OCI-LY7 (cell line): ENCODE measurements at regions of chr6 and their contacts with region 1.

Region 1: GRCh38 chr6:156279261-156279969 is 497.8 kb upstream of the ARID1B start:
- DNase-seq: peak; percentile 98
- H3K4me3 ChIP-seq: peak overlapping the region; percentile 61
- H3K27ac ChIP-seq: peak overlapping the region; percentile 96
- H3K4me1 ChIP-seq: peaks cover 61% of the 10 kb centered on the region
- CTCF ChIP-seq: no peak

Region 2: GRCh38 chr6:156185113-156185512 is 94.3 kb before region 1 on chr6:
- CTCF ChIA-PET with region 1: no interaction called
- POLR2A ChIA-PET with region 1: interaction called, 6 read pairs
- intact Hi-C with region 1: loop called (anchors 1 kb)
- DNase-seq: peak; percentile 85
- H3K4me3 ChIP-seq: no peak overlapping the region
- H3K27ac ChIP-seq: peak overlapping the region; percentile 66
- H3K4me1 ChIP-seq: peaks cover 58% of the 10 kb centered on the region
- CTCF ChIP-seq: no peak

Region 3: DNA sequence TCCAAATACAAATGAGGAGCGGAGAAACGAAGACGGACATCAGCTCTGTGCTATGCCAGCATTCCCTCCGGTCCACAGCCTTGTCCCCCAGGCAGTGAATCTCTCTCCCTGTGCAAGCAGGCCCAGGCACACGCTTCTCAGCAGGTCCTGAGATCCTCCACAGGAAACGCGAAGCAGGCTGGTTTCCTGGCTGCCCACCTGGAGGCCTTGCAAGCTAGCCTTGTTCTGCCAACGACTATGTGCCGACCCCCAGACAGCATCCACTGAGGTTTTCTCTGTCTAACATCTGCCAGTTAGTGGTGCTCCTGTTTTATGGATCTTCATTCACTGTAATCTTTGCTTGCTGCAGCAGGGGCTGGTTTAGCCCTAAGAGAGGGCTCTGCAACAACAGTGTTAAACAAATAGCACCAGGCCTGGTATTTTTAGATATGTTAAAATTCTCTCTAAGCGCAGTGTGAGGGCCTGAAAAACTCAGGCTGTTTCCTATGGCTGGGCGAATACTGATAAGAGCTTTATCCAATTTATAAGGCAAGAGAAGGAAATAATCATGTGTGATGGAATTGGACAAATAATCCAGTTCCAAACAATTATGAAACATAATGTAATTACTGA is 111.8 kb after region 1 on chr6:
- CTCF ChIA-PET with region 1: interaction called, 5 read pairs
- POLR2A ChIA-PET with region 1: interaction called, 45 read pairs
- intact Hi-C with region 1: loop called (anchors 1 kb)
- DNase-seq: peak; percentile 77
- H3K4me3 ChIP-seq: peak overlapping the region; percentile 36
- H3K27ac ChIP-seq: peak overlapping the region; percentile 99
- H3K4me1 ChIP-seq: peaks cover 64% of the 10 kb centered on the region
- CTCF ChIP-seq: no peak